AG04450 (cell line): ENCODE measurements at regions of chr20 and their contacts with region 1.

Region 1: DNA sequence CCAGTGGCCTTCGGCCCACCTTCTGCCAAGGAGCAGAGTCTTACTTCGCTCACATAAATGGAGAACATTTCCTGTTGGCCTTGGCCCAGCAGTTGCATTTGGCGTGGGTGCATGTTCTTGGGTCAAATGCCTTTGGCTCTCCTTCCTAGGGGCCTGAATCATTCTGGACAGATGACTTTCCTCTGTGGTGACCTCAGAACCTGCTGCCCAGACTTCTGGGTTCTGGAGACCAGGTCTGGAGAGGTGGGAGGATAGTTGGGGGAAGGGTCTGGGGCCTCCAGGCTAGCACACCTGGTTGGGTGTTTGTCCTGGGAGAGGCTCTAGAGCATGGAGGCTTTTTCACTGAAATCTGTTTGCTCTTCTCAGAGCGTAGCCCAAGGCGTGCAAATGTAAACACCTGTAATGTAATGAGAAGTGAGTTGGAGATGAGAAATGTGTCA is 29.4 kb downstream of the BCAS4 start:
- DNase-seq: peak; percentile 29
- H3K4me3 ChIP-seq: no peak overlapping the region
- H3K27ac ChIP-seq: peak overlapping the region; percentile 25
- H3K27me3 ChIP-seq: no peaks in the 10 kb centered on the region
- CTCF ChIP-seq: no peak

Region 2: DNA sequence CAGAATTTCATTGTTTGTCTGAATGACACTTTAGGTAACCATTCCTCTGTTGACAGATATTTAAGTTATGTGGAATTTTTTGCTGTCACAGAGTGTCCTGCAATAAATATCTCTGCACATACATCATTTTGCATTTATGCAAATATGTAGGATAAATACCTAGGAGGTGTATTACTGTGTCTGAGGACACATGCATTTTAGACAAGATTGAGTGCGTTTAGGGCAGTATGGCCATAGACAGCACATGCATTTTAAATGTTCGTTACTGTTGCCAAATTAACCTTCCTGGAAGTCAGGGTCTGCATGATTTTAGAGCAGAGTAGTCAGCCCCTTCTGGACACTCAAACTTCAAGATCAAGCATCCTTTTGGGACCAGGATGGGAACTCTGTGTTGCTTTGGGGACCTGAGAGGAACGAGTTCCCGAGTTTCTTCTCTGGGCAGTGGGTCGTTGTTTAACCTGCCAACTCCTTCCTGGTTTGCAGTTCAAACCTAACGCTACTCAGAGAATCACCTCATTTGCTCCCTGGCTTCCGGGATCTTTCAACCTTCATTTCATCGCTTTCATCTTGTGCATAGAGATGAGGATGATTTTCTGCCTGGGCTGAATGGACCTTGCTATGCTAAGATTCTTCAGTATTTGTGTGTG is 19.7 kb before region 1 on chr20:
- CTCF ChIA-PET with region 1: no interaction called
- POLR2A ChIA-PET with region 1: no interaction called
- DNase-seq: no peak
- H3K4me3 ChIP-seq: no peak overlapping the region
- H3K27ac ChIP-seq: no peak overlapping the region
- H3K27me3 ChIP-seq: no peaks in the 10 kb centered on the region
- CTCF ChIP-seq: no peak

Region 3: GRCh38 chr20:50837532-50838506 is 13.6 kb after region 1 on chr20:
- CTCF ChIA-PET with region 1: no interaction called
- POLR2A ChIA-PET with region 1: interaction called, 10 read pairs
- DNase-seq: peak; percentile 80
- H3K4me3 ChIP-seq: no peak overlapping the region
- H3K27ac ChIP-seq: peak overlapping the region; percentile 87
- H3K27me3 ChIP-seq: no peaks in the 10 kb centered on the region
- CTCF ChIP-seq: no peak